ENCODE measurements at regions of chr4 and their contacts with region 1.

Region 1: GRCh38 chr4:72567821-72568675 is 973 bp downstream of the ADAMTS3 start:
- DNase-seq: peak; percentile 44
- H3K4me3 ChIP-seq: peak overlapping the region; percentile 79
- H3K27ac ChIP-seq: peak overlapping the region; percentile 69
- H3K27me3 ChIP-seq: peaks cover 3% of the 10 kb centered on the region
- CTCF ChIP-seq: peak; percentile 59

Region 2: GRCh38 chr4:72557021-72557420 is 11.0 kb before region 1 on chr4:
- CTCF ChIA-PET with region 1: interaction called, 11 read pairs
- POLR2A ChIA-PET with region 1: no interaction called
- DNase-seq: no peak
- H3K4me3 ChIP-seq: no peak overlapping the region
- H3K27ac ChIP-seq: no peak overlapping the region
- H3K27me3 ChIP-seq: no peaks in the 10 kb centered on the region
- CTCF ChIP-seq: no peak

Measured in AG04450 (cell line).